ENCODE measurements at regions of chr3 and their contacts with region 1.

Region 1: DNA sequence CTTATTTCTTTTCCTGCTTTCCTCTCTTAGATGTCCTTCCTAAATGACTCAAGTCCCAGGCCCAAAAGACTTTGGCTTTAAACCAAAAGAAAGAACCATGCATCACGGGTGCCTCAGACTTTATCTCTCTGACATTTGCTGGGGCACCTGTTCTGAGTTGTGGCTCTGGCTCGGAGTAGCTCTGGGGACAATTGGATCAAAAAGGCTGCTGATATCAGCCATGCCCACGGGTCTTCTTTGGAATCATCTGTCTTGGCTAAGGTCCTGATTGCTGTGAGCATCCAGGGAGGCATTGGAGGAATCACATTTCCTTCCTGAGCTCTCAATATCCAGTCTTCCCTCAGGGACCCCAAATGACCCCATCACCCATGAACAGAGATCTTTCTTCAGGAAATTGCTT is 59.9 kb downstream of the CLSTN2 start:
- DNase-seq: no peak
- H3K4me3 ChIP-seq: no peak overlapping the region
- H3K27ac ChIP-seq: no peak overlapping the region
- H3K4me1 ChIP-seq: peaks cover 4% of the 10 kb centered on the region
- H3K27me3 ChIP-seq: no peaks in the 10 kb centered on the region
- CTCF ChIP-seq: no peak

Region 2: GRCh38 chr3:139948898-139949297 is 46.0 kb before region 1 on chr3:
- CTCF ChIA-PET with region 1: no interaction called
- dilution Hi-C with region 1: loop called (anchors 5 kb)
- in situ Hi-C with region 1: no loop called
- intact Hi-C with region 1: no loop called
- DNase-seq: no peak
- H3K4me3 ChIP-seq: no peak overlapping the region
- H3K27ac ChIP-seq: no peak overlapping the region
- H3K4me1 ChIP-seq: peaks cover 13% of the 10 kb centered on the region
- H3K27me3 ChIP-seq: no peaks in the 10 kb centered on the region
- CTCF ChIP-seq: no peak

Region 3: GRCh38 chr3:140170612-140171011 is 175.7 kb after region 1 on chr3:
- CTCF ChIA-PET with region 1: no interaction called
- dilution Hi-C with region 1: no loop called
- in situ Hi-C with region 1: no loop called
- intact Hi-C with region 1: no loop called
- DNase-seq: no peak
- H3K4me3 ChIP-seq: no peak overlapping the region
- H3K27ac ChIP-seq: no peak overlapping the region
- H3K4me1 ChIP-seq: no peaks in the 10 kb centered on the region
- H3K27me3 ChIP-seq: no peaks in the 10 kb centered on the region
- CTCF ChIP-seq: no peak